ENCODE measurements at regions of chr14 and their contacts with region 1.

Region 1: GRCh38 chr14:49867831-49868723 is 15.5 kb upstream of the NEMF start:
- DNase-seq: peak; percentile 99
- ATAC-seq: peak; percentile 91
- H3K4me3 Mint-ChIP-seq: peak overlapping the region; percentile 91
- H3K27ac Mint-ChIP-seq: peak overlapping the region; percentile 96
- H3K4me1 Mint-ChIP-seq: peaks cover 21% of the 10 kb centered on the region
- H3K27me3 Mint-ChIP-seq: no peaks in the 10 kb centered on the region

Region 2: DNA sequence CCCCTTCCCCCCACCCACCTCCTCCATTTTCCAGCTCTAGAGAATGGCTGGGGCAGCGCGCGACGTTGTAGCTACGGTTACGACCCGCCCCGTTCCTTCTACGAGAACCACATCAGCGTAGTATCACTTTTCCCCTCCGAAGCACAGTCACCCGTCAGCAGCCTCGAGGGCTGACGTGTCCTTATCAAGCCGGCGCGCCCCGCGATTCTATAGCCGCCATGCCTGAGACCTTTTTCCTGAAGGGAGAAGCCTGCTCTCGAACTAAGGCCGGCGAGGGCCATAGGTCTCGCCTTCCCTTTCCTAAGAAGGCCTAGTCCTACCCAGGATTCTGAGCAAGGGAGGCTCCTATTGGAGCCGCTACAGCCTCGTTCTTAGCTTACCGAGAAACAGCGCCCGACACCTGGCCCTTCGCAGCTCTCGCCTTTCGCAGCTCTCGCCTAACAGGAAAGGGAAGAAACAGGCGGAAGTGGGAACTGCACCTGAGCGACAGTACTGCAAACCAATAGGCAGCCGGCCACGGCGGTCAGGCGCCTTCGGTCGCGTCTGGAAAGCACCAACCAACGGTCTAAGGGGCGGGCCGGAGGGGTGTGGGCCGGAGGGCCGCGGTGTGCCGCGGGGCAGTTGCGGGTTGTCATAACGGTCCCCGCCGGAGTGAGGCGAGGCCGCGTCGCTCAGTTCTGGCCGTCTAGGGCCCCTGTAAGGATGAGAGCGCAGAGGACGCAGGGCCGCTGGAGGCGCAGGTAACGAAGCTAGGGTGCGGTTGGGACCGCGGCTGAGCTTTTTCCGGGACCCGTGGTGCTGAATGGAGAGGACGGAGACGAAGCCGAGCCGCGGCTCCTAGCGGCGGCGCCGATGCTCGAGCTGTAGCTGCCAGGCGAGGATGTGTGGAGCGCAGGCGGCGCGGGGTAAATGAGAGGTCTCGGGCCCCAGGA is 247.6 kb before region 1 on chr14 and contains the starts of genes MGAT2 and RPL36AL:
- CTCF ChIA-PET with region 1: interaction called, 17 read pairs
- POLR2A ChIA-PET with region 1: interaction called, 12 read pairs
- DNase-seq: peak; percentile 97
- ATAC-seq: peak; percentile 91
- H3K4me3 Mint-ChIP-seq: peak within 1 kb of the TSS; percentile 93
- H3K27ac Mint-ChIP-seq: peak within 1 kb of the TSS; percentile 96
- H3K4me1 Mint-ChIP-seq: peaks cover 58% of the 10 kb centered on the region
- H3K27me3 Mint-ChIP-seq: no peaks in the 10 kb centered on the region
- total RNA-seq, gene MGAT2: 55.1 to 57.4 TPM
- total RNA-seq, gene RPL36AL: 229 to 241 TPM

Region 3: DNA sequence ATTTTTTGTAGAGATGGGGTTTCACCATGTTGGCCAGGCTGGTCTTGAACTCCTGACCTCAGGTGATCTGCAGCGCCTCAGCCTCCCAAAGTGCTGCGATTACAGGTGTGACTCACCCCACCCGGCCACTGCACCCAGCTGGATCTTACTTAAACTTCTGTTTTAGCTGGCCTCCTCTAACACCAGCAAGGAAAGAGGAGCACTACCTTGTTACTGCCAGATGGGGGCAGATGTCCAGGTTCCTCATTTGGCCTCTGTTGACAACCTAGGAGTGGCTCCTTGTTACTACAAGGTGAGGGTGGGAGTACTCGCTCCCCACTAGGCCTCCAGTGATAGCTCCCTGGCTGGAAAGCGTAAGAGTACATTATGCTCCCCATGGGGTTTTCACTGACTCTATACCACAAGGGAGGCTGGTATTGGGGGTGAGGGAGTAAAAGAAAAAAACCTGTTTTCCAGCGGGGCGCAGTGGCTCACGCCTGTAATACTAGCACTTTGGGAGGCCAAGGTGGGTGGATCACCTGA is 11.7 kb after region 1 on chr14:
- CTCF ChIA-PET with region 1: interaction called, 31 read pairs
- POLR2A ChIA-PET with region 1: interaction called, 12 read pairs
- DNase-seq: peak; percentile 73
- ATAC-seq: peak; percentile 91
- H3K4me3 Mint-ChIP-seq: no peak overlapping the region
- H3K27ac Mint-ChIP-seq: peak overlapping the region; percentile 43
- H3K4me1 Mint-ChIP-seq: peaks cover 29% of the 10 kb centered on the region
- H3K27me3 Mint-ChIP-seq: peaks cover 2% of the 10 kb centered on the region

Region 4: DNA sequence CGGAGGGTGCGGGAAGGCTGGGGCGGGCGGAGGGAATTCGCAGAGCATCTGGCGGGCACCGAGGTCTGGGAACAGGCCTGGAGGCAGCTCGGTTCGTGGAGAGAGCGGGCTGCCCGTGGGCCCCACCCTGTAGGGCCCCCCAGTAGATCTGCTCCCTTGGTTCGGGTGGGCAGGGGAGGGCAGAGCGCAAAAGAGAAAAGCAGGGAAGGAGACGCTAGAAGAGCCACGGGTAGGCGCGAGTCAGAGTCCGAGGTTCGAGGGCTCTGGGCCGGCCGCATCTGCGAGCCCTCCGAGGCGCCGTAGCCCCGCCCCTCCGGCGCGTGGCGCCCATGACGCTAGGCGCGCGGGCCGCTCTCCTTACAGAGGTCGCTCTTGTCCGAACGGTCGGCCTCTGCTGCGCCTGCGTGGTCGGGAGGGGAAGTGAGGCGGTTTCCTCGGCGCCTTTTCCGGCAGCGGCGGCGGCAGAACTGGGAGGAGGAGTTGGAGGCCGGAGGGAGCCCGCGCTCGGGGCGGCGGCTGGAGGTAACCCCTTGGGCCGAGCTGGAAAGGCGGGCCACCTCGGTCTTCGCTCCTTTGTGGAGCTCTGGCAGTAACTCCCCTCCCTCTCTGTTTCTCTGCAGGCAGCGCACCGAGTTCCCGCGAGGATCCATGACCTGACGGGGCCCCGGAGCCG is 24.7 kb after region 1 on chr14 and contains the start of gene ARF6:
- CTCF ChIA-PET with region 1: interaction called, 22 read pairs
- POLR2A ChIA-PET with region 1: interaction called, 46 read pairs
- DNase-seq: peak; percentile 98
- ATAC-seq: peak; percentile 89
- H3K4me3 Mint-ChIP-seq: peak within 1 kb of the TSS; percentile 90
- H3K27ac Mint-ChIP-seq: peak within 1 kb of the TSS; percentile 97
- H3K4me1 Mint-ChIP-seq: peaks cover 17% of the 10 kb centered on the region
- H3K27me3 Mint-ChIP-seq: no peaks in the 10 kb centered on the region
- total RNA-seq, gene ARF6: 183 to 193 TPM

Region 5: GRCh38 chr14:50021261-50022031 is 153.4 kb after region 1 on chr14:
- CTCF ChIA-PET with region 1: no interaction called
- POLR2A ChIA-PET with region 1: no interaction called
- DNase-seq: no peak
- ATAC-seq: peak; percentile 80
- H3K4me3 Mint-ChIP-seq: peak overlapping the region; percentile 34
- H3K27ac Mint-ChIP-seq: peak overlapping the region; percentile 82
- H3K4me1 Mint-ChIP-seq: peaks cover 30% of the 10 kb centered on the region
- H3K27me3 Mint-ChIP-seq: no peaks in the 10 kb centered on the region

Region 6: DNA sequence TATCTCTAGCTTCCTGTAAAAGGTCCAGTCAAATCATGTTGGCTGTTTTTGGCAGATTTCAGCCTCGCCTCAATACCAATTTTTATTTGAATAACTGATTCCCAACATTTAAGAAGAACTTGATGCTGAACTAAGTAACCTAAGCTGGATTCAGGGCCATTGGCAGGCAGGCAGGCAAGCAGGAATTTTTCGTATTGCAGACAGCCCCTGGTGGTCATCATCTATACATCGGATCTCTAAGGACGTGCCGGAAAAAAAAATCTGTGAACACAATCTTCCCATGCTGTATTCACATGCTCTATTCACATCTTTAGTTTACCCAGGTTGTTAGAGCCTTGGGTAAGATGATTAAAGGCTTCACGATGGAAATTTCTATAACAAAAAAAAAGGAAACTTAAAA is 241.3 kb after region 1 on chr14:
- CTCF ChIA-PET with region 1: interaction called, 181 read pairs
- POLR2A ChIA-PET with region 1: interaction called, 31 read pairs
- DNase-seq: no peak
- ATAC-seq: no peak
- H3K4me3 Mint-ChIP-seq: no peak overlapping the region
- H3K27ac Mint-ChIP-seq: no peak overlapping the region
- H3K4me1 Mint-ChIP-seq: peaks cover 31% of the 10 kb centered on the region
- H3K27me3 Mint-ChIP-seq: no peaks in the 10 kb centered on the region

Measured in activated CD8-positive, alpha-beta T cell treated with anti-CD3 and anti-CD28 coated beads, Interleukin-2, amount 10 ng/mL, durations not matched to agents 7 days and 5 days (primary cell).